ENCODE measurements at regions of chr15 and their contacts with region 1.

Region 1: DNA sequence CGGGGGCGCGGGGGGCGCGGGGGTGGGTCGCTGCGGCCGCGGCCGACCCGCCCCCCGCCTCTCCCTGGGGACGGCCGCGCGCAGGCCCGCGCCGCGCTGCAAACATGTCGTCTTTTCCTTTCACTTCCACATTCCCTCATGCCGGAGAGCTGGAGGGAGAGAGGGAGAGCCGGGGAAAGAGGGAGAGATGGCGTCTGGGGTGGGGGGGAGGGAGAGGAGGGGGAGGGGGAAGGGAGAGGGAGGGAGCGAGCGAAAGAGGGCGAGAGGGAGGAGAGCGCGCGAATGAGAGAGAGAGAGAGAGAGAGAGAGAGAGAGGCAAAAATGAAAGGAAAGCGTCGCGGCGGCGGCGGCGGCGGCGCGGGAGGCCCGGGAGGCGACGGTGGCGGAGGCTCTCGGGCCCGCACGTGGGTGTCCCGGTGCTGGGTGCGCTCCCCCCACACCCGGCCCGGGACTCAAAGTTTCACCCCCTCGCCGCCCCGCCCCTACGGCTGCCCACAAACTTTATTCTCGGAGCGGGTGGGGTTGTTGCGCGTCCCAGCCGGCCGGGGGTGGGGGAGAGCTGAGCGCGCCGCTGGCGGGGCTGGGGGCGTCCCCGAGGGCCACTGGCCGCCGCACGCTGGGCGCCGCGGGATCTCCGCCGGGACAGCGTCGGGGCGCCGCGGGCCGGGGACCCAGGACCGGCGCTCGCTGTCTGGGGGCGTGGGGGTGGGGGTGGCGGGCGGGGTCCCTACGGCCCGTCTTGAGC is 731 bp downstream of the ZNF710 start:
- DNase-seq: peak; percentile 53 to 71
- H3K4me3 ChIP-seq: peak overlapping the region; percentile 65
- H3K4me3 Mint-ChIP-seq: peak overlapping the region; percentile 86
- H3K27ac Mint-ChIP-seq: peak overlapping the region; percentile 88
- H3K4me1 ChIP-seq: peaks cover 64% of the 10 kb centered on the region
- H3K4me1 Mint-ChIP-seq: peaks cover 42% of the 10 kb centered on the region
- H3K27me3 ChIP-seq: no peaks in the 10 kb centered on the region
- H3K27me3 Mint-ChIP-seq: no peaks in the 10 kb centered on the region
- CTCF ChIP-seq: no peak

Region 2: DNA sequence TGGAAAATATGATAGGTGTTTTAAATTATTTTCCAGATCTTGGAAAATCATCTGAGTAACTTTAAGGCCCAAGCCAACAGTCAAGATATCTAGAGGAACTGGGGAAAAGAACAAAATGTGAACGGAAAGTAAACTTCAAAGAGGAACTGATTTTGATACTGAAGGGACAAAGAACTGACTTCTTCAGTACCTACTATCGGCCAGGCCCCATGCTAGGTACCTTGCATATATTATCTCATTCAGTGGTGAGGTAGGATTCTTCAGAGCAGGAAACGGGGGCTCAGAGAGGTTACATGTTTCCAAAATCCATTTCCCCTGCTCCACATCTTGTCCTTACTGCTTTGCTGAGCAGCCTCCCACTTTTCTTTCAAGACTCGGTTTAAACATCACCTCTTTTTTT is 10.5 kb before region 1 on chr15:
- CTCF ChIA-PET with region 1: no interaction called
- POLR2A ChIA-PET with region 1: no interaction called
- intact Hi-C with region 1: no loop called
- DNase-seq: no peak
- H3K4me3 ChIP-seq: no peak overlapping the region
- H3K4me3 Mint-ChIP-seq: no peak overlapping the region
- H3K27ac Mint-ChIP-seq: no peak overlapping the region
- H3K4me1 ChIP-seq: no peaks in the 10 kb centered on the region
- H3K4me1 Mint-ChIP-seq: no peaks in the 10 kb centered on the region
- H3K27me3 ChIP-seq: no peaks in the 10 kb centered on the region
- H3K27me3 Mint-ChIP-seq: no peaks in the 10 kb centered on the region
- CTCF ChIP-seq: no peak

Region 3: DNA sequence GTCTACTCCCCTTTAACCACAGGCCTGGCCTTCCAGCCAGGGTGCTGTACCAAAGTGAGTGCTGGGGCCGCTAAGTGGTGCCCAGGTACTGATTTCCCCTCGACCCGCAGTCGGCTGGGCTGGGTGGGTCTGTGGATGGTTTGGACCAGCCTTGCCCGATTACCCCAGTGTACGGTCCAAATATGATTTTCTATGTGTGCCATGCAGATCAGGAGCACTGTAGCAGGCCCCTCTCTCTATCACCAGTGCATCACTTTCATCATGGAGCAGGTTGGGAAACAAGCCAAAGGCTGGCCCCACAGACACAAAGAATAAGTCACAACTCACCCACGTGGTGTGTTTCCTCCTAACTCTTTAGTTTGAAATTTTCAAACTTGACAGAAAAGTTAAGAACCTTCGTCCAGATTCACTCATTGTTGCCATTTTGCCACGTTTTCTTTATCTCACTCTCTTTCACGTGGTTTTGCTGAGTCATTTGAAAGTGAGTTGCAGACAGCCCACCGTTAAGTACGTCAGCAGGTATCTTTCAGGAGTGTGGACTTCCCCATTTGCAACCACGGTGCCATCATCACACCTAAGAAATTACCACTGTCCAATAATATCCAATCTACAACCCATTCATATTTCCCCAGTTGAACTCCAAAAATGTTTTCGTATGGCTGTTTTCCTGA is 36.2 kb after region 1 on chr15:
- CTCF ChIA-PET with region 1: no interaction called
- POLR2A ChIA-PET with region 1: no interaction called
- intact Hi-C with region 1: loop called (anchors 5 kb)
- DNase-seq: no peak
- H3K4me3 ChIP-seq: no peak overlapping the region
- H3K4me3 Mint-ChIP-seq: no peak overlapping the region
- H3K27ac Mint-ChIP-seq: no peak overlapping the region
- H3K4me1 ChIP-seq: peaks cover 24% of the 10 kb centered on the region
- H3K4me1 Mint-ChIP-seq: peaks cover 20% of the 10 kb centered on the region
- H3K27me3 ChIP-seq: no peaks in the 10 kb centered on the region
- H3K27me3 Mint-ChIP-seq: no peaks in the 10 kb centered on the region
- CTCF ChIP-seq: no peak

Region 4: DNA sequence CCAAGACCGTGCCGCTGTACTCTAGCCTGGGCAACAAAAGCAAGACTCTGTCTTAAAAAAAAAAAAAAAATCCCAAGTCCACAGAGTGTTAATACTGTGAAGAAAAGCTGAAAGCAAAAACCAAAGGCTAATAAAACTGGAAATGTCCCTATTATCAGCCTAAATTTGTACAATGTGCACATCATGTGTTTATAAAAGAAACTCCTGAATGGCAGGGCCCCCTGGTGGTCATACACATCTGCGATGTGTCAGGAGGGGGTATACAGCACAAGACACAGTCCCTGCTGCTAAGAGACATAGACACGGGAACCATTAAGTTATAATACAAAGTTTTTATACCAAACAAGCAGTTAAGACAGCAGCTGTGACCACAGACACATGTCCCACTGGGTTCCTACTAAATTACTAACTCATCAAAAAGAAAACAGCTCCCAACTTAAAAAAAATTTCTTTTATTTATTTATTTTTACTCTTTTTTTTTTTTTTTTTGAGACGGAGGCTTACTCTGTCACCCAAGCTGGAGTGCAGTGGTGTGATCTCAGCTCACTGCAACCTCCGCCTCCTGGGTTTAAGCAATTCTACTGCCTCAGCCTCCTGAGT is 69.5 kb after region 1 on chr15:
- CTCF ChIA-PET with region 1: interaction called, 3 read pairs
- POLR2A ChIA-PET with region 1: interaction called, 4 read pairs
- intact Hi-C with region 1: loop called (anchors 5 kb)
- DNase-seq: peak; percentile 74 to 78
- H3K4me3 ChIP-seq: no peak overlapping the region
- H3K4me3 Mint-ChIP-seq: no peak overlapping the region
- H3K27ac Mint-ChIP-seq: no peak overlapping the region
- H3K4me1 ChIP-seq: peaks cover 14% of the 10 kb centered on the region
- H3K4me1 Mint-ChIP-seq: peaks cover 14% of the 10 kb centered on the region
- H3K27me3 ChIP-seq: no peaks in the 10 kb centered on the region
- H3K27me3 Mint-ChIP-seq: no peaks in the 10 kb centered on the region
- CTCF ChIP-seq: peak; percentile 72 to 73

Measured in Caco-2 (cell line).